ENCODE measurements at regions of chr11 and their contacts with region 1.

Region 1: DNA sequence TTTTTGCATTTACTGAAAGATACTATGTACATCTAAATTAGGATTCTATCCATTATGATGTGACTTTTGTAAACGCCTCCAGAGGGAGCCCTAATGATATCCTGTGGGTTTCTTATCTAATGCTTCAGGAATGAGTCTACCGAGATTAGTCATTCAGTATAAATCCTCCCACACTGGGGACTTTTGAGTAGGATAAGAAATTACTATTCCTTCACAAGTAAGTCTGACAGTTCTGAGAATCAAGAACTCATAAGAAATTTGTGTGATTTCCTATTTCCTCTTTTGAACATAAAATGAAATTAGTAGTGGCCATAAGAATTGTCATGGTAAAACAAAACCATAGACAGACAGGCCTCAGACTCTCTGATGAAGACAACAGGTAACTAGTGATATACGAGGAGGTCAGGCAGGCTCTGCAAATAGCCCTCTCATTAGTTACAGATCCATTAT is 10.0 kb upstream of the OR5M1 start:
- DNase-seq: peak; percentile 30
- ATAC-seq: peak; percentile 86
- H3K4me3 ChIP-seq: no peak overlapping the region
- H3K27ac ChIP-seq: no peak overlapping the region
- H3K4me1 ChIP-seq: no peaks in the 10 kb centered on the region
- H3K27me3 ChIP-seq: no peaks in the 10 kb centered on the region
- CTCF ChIP-seq: peak; percentile 12 to 44 (median 29); a peak in 1 of 6 replicates
- EP300 ChIP-seq: peak in 1 of 2 experiments; percentile 82; a peak in 3 of 4 replicates
- POLR2A ChIP-seq: no peak
- RAD21 ChIP-seq: peak; percentile 48; the same call in 1 of the 2 replicates

Region 2: DNA sequence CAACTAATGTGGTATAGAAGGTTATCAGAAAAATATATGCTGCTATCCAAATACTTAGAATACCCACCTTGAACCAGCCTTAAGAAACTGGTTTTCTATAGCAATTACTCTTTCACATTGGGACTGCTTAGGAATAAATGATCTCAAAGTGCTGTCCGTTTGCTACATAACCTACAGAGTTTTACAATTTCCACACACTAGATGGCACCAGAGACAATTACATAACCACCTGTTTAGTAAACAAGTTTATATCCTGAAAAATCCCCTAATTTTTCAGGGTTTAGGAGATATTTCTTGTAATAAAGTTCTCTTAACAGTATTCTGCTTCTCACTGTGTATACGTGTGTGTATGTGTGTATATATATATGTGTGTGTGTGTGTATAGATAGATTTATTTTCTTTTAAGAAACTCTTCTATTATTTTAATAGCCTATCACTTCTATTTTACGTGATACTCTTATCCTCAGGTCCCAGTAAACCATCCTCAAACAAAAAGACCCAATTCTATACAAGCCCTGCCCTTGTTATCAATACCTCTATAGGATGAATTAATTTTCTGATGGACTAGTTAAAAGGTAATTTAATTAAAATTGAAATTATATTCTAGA is 681.8 kb before region 1 on chr11:
- CTCF ChIA-PET with region 1: no interaction called
- POLR2A ChIA-PET with region 1: no interaction called
- RAD21 ChIA-PET with region 1: no interaction called
- SMC1A ChIA-PET with region 1: no interaction called
- in situ Hi-C with region 1: no loop called
- intact Hi-C with region 1: loop called (anchors 5 kb)
- DNase-seq: no peak
- ATAC-seq: peak; percentile 61; the same call in 2 of the 3 replicates
- H3K4me3 ChIP-seq: no peak overlapping the region
- H3K27ac ChIP-seq: no peak overlapping the region
- H3K4me1 ChIP-seq: no peaks in the 10 kb centered on the region
- H3K27me3 ChIP-seq: no peaks in the 10 kb centered on the region
- CTCF ChIP-seq: peak; percentile 37 to 61 (median 38); a peak in 4 of 6 replicates
- EP300 ChIP-seq: no peak
- POLR2A ChIP-seq: no peak
- RAD21 ChIP-seq: peak; percentile 58

Region 3: GRCh38 chr11:56670984-56671383 is 46.3 kb after region 1 on chr11:
- CTCF ChIA-PET with region 1: no interaction called
- POLR2A ChIA-PET with region 1: no interaction called
- RAD21 ChIA-PET with region 1: no interaction called
- SMC1A ChIA-PET with region 1: no interaction called
- in situ Hi-C with region 1: no loop called
- intact Hi-C with region 1: no loop called
- DNase-seq: no peak
- ATAC-seq: no peak
- H3K4me3 ChIP-seq: no peak overlapping the region
- H3K27ac ChIP-seq: no peak overlapping the region
- H3K4me1 ChIP-seq: no peaks in the 10 kb centered on the region
- H3K27me3 ChIP-seq: no peaks in the 10 kb centered on the region
- CTCF ChIP-seq: no peak
- EP300 ChIP-seq: no peak
- POLR2A ChIP-seq: no peak
- RAD21 ChIP-seq: no peak

Region 4: GRCh38 chr11:57269571-57270021 is 644.9 kb after region 1 on chr11:
- CTCF ChIA-PET with region 1: no interaction called
- POLR2A ChIA-PET with region 1: no interaction called
- RAD21 ChIA-PET with region 1: no interaction called
- SMC1A ChIA-PET with region 1: no interaction called
- in situ Hi-C with region 1: no loop called
- intact Hi-C with region 1: loop called (anchors 10 kb)
- DNase-seq: no peak
- ATAC-seq: no peak
- H3K4me3 ChIP-seq: no peak overlapping the region
- H3K27ac ChIP-seq: no peak overlapping the region
- H3K4me1 ChIP-seq: no peaks in the 10 kb centered on the region
- H3K27me3 ChIP-seq: no peaks in the 10 kb centered on the region; a peak in 1 of 4 replicates
- CTCF ChIP-seq: no peak
- EP300 ChIP-seq: no peak
- POLR2A ChIP-seq: no peak
- RAD21 ChIP-seq: no peak

Measured in GM12878 (cell line).